Testis (tissue), 5 donors: ENCODE measurements at regions of chr6 and their contacts with region 1.

Region 1: GRCh38 chr6:85482905-85483700 is 33.2 kb downstream of the NT5E start:
- DNase-seq: peak; percentile 89
- H3K4me3 ChIP-seq: no peak overlapping the region
- H3K27ac ChIP-seq: no peak overlapping the region
- H3K4me1 ChIP-seq: no peaks in the 10 kb centered on the region
- H3K27me3 ChIP-seq: no peaks in the 10 kb centered on the region
- CTCF ChIP-seq: peak; percentile 99 to 100 (median 99)
- POLR2A ChIP-seq: no peak

Region 2: GRCh38 chr6:85354761-85355618 is 128.1 kb before region 1 on chr6:
- intact Hi-C with region 1: loop called (anchors 2 kb)
- DNase-seq: peak; percentile 85
- H3K4me3 ChIP-seq: no peak overlapping the region
- H3K27ac ChIP-seq: no peak overlapping the region
- H3K4me1 ChIP-seq: no peaks in the 10 kb centered on the region
- H3K27me3 ChIP-seq: no peaks in the 10 kb centered on the region
- CTCF ChIP-seq: peak; percentile 89 to 98 (median 94)
- POLR2A ChIP-seq: no peak

Region 3: GRCh38 chr6:85516168-85516567 is 33.1 kb after region 1 on chr6:
- intact Hi-C with region 1: no loop called
- DNase-seq: no peak
- H3K4me3 ChIP-seq: no peak overlapping the region
- H3K27ac ChIP-seq: no peak overlapping the region
- H3K4me1 ChIP-seq: no peaks in the 10 kb centered on the region
- H3K27me3 ChIP-seq: no peaks in the 10 kb centered on the region
- CTCF ChIP-seq: no peak
- POLR2A ChIP-seq: no peak